Heart right ventricle (tissue), 16 donors: ENCODE measurements at regions of chr11 and their contacts with region 1.

Region 1: GRCh38 chr11:101436511-101437142 is 147.2 kb downstream of the TRPC6 start:
- DNase-seq: peak in 1 of 2 donors; percentile 17
- ATAC-seq: peak in 3 of 8 donors; percentile 37 to 55 (median 54)
- H3K4me3 ChIP-seq: no peak overlapping the region
- H3K27ac ChIP-seq: no peak overlapping the region
- H3K4me1 ChIP-seq: peaks cover 0 to 15% (median 0%) of the 10 kb centered on the region in 9 donors
- H3K27me3 ChIP-seq: no peaks in the 10 kb centered on the region
- CTCF ChIP-seq: peak; percentile 33 to 74 (median 63)

Region 2: GRCh38 chr11:101390539-101390938 is 46.1 kb before region 1 on chr11:
- intact Hi-C with region 1: loop called in 1 of 10 experiments (anchors 5 kb)
- DNase-seq: no peak
- ATAC-seq: no peak
- H3K4me3 ChIP-seq: no peak overlapping the region
- H3K27ac ChIP-seq: no peak overlapping the region
- H3K4me1 ChIP-seq: no peaks in the 10 kb centered on the region
- H3K27me3 ChIP-seq: no peaks in the 10 kb centered on the region
- CTCF ChIP-seq: peak in 4 of 9 donors; percentile 29 to 40 (median 34)

Region 3: GRCh38 chr11:102254045-102254444 is 817.4 kb after region 1 on chr11:
- intact Hi-C with region 1: no loop called
- DNase-seq: no peak
- ATAC-seq: no peak
- H3K4me3 ChIP-seq: no peak overlapping the region
- H3K27ac ChIP-seq: no peak overlapping the region
- H3K4me1 ChIP-seq: no peaks in the 10 kb centered on the region
- H3K27me3 ChIP-seq: no peaks in the 10 kb centered on the region
- CTCF ChIP-seq: peak in 5 of 9 donors; percentile 4 to 37 (median 18)